ENCODE measurements at regions of chr4 and their contacts with region 1.

Region 1: DNA sequence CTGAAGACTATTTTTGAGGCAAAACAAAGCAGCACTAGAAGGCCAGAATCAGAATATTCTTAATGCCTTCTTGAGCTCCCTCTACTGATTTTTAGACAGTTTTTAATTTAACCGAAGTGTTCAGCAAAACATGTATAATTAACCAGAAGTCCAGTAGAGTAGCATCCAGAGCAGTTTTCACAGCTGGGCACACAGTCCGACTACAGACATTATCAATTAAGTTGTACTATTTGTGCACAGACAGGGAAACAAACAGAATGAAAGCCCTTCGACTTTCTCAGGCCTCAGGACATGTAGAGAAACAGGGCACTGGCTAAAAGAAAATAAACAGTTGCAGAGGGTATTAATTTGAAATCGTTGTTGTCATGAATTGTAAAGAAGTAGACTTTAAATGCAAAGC is 11.9 kb downstream of the FSTL5 start:
- DNase-seq: no peak
- CTCF ChIP-seq: no peak

Region 2: DNA sequence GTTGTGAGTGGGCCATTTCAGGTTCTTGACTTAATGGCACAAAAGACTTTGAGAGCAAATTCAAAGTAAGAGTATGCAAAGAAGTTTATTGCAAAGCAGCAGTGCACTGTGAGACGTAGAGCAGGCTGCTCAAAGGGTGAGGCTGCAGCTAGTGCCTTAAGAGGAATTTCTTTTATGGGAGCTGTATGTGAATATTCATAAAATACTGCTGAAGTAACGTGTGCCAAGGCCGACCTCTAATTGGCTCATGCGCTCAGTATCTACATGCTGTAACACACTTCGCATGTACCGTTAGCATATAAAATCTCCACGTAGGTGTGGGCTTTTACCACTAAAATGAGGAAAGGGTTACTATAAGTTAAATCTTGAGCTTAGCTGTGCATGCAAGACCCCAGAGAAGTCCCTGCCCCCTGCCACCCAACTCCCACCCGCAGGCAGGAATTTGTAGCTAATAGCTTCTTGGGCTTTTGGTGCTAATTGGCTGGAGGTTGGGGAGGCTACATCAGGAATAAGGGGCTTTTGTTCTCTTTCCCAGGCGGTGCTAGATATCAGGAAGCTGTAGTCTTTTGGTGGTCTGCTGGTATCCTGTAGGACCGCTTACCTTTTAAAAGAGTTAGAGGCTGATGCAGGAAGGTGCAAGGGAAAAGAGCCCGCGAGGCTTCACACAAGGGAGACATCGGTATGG is 35.6 kb before region 1 on chr4:
- CTCF ChIA-PET with region 1: no interaction called
- POLR2A ChIA-PET with region 1: no interaction called
- DNase-seq: no peak
- CTCF ChIP-seq: no peak

Region 3: DNA sequence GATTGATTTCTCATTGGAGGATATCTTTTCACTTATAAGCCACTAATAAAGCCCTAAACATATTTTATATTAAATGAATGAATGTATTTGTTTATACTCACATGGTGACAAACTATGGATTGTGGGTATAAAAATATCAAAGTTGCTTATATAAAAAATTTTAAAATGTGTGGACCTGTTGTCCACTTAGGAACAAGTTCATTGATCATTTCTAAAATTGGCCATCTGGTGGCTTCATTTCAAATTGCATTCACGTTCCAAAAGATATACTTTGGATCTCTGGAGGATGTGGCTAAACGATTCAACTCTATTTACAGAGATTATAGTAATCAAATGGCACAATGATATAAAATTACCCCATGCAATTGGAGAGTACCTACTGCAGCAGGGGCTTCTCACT is 20.6 kb before region 1 on chr4:
- CTCF ChIA-PET with region 1: interaction called, 11 read pairs
- POLR2A ChIA-PET with region 1: no interaction called
- DNase-seq: no peak
- CTCF ChIP-seq: no peak

Region 4: DNA sequence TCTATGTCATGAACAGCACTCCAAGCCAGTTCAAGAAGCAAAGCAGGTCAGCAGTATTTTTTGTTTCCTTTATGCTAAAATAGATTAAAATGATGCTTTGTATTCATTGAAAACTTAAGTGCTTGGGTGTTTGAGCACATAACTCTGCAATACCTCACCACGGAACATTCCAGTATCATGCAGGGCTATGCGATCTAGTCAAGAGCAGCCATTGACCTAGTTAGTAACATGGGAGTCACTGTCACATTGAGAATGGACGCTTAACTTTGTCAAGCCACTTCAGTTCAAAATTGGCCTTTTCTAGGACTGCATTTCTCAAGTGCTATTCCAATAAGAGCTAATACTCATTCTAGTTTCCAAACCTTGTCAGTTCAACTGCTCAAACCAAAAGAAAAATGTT is 172.1 kb after region 1 on chr4:
- CTCF ChIA-PET with region 1: no interaction called
- POLR2A ChIA-PET with region 1: no interaction called
- DNase-seq: no peak
- CTCF ChIP-seq: no peak

Measured in GM10248 (cell line).